Aorta (tissue), 5 donors: ENCODE measurements at regions of chr1 and their contacts with region 1.

Region 1: GRCh38 chr1:43529206-43529731 is 1.4 kb upstream of the PTPRF start:
- DNase-seq: peak; percentile 88 to 96
- ATAC-seq: peak; percentile 79
- H3K4me3 ChIP-seq: no peak overlapping the region
- H3K27ac ChIP-seq: no peak overlapping the region
- H3K4me1 ChIP-seq: no peaks in the 10 kb centered on the region
- H3K27me3 ChIP-seq: no peaks in the 10 kb centered on the region

Region 2: GRCh38 chr1:43545695-43546387 is 16.6 kb after region 1 on chr1:
- intact Hi-C with region 1: no loop called
- DNase-seq: peak; percentile 77 to 91
- ATAC-seq: peak; percentile 60
- H3K4me3 ChIP-seq: no peak overlapping the region
- H3K27ac ChIP-seq: no peak overlapping the region
- H3K4me1 ChIP-seq: no peaks in the 10 kb centered on the region
- H3K27me3 ChIP-seq: no peaks in the 10 kb centered on the region

Region 3: GRCh38 chr1:43565600-43566360 is 36.5 kb after region 1 on chr1:
- intact Hi-C with region 1: loop called (anchors 1 to 5 kb)
- DNase-seq: peak; percentile 76 to 91
- ATAC-seq: peak; percentile 83
- H3K4me3 ChIP-seq: peak overlapping the region in 1 of 2 donors; percentile 29
- H3K27ac ChIP-seq: no peak overlapping the region
- H3K4me1 ChIP-seq: no peaks in the 10 kb centered on the region
- H3K27me3 ChIP-seq: no peaks in the 10 kb centered on the region

Region 4: DNA sequence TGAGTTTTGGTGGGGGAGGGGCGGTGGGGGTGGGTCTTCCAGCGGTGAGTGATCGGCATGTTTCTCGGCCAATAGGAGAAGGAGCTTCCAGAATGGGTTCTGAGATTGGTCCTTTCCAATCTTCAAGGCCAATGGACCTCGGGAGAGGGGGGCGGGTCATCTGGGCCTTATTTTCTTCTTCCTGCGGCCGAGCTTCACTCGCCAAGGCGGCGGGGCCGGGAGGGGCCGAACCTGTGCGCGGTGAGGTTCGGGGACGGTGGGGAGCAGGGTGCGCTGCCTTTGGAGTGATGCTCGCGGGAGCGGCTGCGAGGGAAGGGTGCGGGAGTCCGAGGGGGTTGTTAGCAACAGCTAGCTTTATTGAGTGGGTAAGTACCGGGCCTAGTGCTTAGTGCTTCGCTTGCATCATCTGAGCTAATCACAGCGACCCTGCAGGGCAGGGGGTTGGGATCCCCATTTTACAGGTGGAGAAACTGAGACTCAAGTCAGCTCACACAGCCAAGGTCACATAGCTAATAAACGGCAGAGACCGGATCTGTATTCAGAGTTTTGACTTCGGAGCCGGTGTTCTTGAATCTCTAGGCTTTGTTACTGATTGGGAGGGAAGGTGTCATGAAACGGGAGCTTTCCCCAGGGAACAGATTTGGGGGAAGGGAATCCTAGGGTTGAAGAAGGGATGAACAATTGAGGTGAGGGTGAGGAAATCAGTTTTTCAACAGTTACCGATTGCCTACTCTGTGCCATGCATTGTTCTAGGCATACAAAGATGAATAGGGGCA is 121.2 kb after region 1 on chr1:
- intact Hi-C with region 1: loop called (anchors 2 to 5 kb)
- DNase-seq: peak; percentile 96 to 97
- ATAC-seq: peak; percentile 94
- H3K4me3 ChIP-seq: peak overlapping the region; percentile 77 to 95
- H3K27ac ChIP-seq: peak overlapping the region in 1 of 2 donors; percentile 73
- H3K4me1 ChIP-seq: peaks cover 4 to 7% of the 10 kb centered on the region in 2 donors
- H3K27me3 ChIP-seq: peaks cover 0 to 1% of the 10 kb centered on the region in 2 donors

Region 5: DNA sequence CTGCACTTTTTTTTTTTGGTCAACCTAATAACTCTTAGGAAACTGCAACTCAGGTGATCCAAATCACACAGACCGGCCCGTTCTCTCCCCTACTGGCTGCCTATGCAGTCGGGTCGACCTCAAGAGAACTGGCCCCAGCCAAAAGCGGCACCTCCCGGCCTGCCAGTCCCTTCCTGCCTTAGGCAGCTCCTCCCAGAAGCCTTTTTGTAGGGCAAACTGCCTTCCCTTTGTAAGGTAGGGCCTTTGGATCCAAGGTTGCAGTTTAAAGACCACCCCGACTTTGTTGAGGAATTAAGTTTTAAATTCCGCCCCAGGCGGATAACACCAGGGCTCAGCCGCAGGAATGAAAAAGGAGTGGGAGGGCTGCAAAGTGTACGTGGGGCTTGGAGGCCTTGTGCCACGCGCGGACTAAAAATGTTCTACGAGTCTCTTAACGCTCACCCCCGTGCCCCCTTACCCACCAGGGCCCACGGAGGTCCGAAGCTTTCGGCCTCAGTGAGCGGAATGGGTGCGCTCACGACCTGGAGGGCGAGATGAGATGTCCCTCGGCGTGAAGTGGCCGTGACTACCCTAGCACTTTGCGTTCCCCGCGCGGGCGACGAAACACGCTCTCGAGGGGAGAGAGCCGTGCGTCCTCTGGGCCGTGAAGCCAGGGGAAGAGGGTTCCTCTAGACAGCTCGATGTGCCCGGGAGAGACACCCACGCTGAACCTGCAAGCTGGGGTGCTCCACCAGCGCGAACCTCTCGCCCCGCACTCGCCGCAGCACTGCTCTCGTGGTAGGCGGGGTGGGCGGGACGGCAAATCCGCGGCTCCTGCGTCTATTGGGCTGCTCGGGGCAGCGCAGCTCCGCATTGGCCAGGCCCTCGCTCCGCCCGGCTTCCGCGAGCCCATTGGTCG is 177.6 kb after region 1 on chr1:
- intact Hi-C with region 1: loop called in 1 of 2 experiments (anchors 5 kb)
- DNase-seq: peak; percentile 95 to 97
- ATAC-seq: peak; percentile 98
- H3K4me3 ChIP-seq: peak overlapping the region; percentile 5 to 80
- H3K27ac ChIP-seq: no peak overlapping the region
- H3K4me1 ChIP-seq: no peaks in the 10 kb centered on the region
- H3K27me3 ChIP-seq: no peaks in the 10 kb centered on the region

Region 6: GRCh38 chr1:43934101-43934985 is 405.1 kb after region 1 on chr1:
- intact Hi-C with region 1: loop called in 1 of 2 experiments (anchors 10 kb)
- DNase-seq: peak; percentile 70 to 88
- ATAC-seq: peak; percentile 63
- H3K4me3 ChIP-seq: no peak overlapping the region
- H3K27ac ChIP-seq: no peak overlapping the region
- H3K4me1 ChIP-seq: no peaks in the 10 kb centered on the region
- H3K27me3 ChIP-seq: no peaks in the 10 kb centered on the region

Region 7: DNA sequence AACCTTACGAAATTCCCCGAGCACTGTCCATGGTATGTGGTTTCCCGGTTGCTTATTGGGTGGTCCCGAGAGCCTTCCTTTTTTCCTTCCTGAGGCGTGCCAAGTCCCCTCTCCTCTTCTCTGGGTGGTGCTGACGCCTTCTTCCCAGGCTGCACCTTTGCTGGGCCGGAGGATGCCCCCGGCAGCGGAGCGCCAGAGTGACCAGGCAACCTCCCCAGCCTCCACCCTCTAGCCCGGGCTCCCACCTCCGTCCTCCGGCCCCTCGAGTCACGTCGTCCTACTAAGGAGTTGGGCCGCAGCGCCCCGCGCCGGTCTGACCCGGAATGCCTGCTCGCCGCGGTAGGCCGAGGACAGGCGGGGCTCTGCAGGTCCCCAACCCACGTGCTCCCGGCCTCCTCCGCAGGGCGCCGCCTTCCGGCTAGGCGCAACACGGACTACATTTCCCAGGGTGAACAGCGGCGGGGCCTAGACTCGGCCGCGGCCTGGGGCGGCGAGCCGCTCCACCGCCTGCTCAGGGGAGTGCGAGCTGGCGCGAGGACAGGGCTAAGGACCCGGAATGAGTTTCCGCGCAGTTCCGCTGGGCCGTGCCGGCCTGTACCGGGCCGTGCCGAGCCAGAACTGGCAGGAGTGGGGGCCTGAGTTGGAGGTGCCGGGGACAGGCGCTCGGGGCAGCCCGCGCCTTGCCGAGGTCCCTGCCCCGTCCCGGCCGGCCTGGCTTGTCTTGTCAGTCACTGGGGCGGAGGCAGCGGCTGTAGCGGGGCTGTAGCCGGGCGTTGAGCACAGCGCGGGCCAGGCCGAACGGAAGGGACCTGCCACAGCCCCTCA is 417.2 kb after region 1 on chr1 and contains the start of gene IPO13:
- intact Hi-C with region 1: loop called in 1 of 2 experiments (anchors 10 kb)
- DNase-seq: peak; percentile 97 to 99
- ATAC-seq: peak; percentile 98
- H3K4me3 ChIP-seq: peak within 1 kb of the TSS; percentile 59 to 73
- H3K27ac ChIP-seq: peak within 1 kb of the TSS; percentile 71 to 80
- H3K4me1 ChIP-seq: no peaks in the 10 kb centered on the region
- H3K27me3 ChIP-seq: no peaks in the 10 kb centered on the region
- total RNA-seq, gene IPO13: 19.4 to 22.5 TPM